Calu3 (cell line): ENCODE measurements at regions of chr4 and their contacts with region 1.

Region 1: DNA sequence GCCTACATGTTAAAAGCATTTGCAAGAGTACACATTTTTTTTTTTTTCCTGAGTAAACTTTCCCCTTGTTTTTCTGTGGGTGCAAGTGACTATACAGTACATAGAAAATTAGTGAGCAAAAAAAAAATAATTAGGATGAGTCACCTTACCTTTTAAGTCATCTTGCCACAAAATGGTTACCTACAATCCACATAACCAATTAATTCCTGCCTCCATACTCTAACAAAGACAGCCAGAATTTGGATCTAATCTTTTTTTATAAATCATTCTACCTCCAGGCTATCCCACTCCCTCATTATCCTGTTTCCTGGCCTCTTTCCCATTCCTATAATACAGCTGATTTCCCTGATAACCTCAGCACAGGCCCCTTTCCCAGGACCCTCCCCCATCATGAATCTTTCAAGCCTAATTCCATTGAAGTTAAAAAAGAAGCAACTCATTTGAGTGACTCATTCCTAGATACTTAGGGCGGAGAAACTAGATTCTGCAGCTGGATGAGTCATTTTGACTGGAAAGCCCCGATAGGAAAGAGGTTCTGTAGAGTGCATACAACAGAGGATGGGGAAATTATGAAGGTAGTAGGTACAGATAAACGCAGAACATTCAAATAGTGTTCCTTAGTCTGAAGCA is 128.2 kb downstream of the C4orf51 start:
- DNase-seq: peak; percentile 49
- H3K4me3 Mint-ChIP-seq: peak overlapping the region; percentile 46
- H3K27ac Mint-ChIP-seq: peak overlapping the region; percentile 94
- H3K4me1 Mint-ChIP-seq: peaks cover 34% of the 10 kb centered on the region
- H3K27me3 Mint-ChIP-seq: no peaks in the 10 kb centered on the region
- CTCF ChIP-seq: no peak

Region 2: GRCh38 chr4:145679991-145680455 is 128.1 kb before region 1 on chr4 and contains the start of gene C4orf51:
- CTCF ChIA-PET with region 1: no interaction called
- intact Hi-C with region 1: loop called (anchors 5 kb)
- DNase-seq: peak; percentile 31
- H3K4me3 Mint-ChIP-seq: peak within 1 kb of the TSS; percentile 50
- H3K27ac Mint-ChIP-seq: peak within 1 kb of the TSS; percentile 91
- H3K4me1 Mint-ChIP-seq: peaks cover 28% of the 10 kb centered on the region
- H3K27me3 Mint-ChIP-seq: no peaks in the 10 kb centered on the region
- CTCF ChIP-seq: no peak
- total RNA-seq, gene C4orf51: not detected in 2 replicates